Heart left ventricle (tissue), 16 donors: ENCODE measurements at regions of chr13 and their contacts with region 1.

Region 1: DNA sequence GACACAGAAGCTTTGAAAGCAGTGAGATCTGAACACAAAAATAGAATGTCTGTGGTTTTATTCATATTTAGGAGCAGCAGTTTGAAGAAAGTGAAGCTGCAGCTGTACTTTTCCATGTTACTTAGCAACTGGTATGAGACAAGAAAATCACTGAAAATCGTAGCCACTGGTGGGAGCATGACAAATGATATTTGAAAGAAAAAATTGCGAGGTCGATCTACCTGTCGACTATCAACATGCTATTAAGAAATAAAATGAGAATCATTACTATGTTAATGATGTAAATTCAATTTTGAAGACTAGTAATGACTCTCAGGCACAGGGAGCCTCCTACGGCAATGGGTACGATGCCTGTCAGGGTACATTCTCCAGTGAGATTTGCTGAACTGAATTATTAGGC is 436.4 kb downstream of the SLITRK5 start:
- DNase-seq: no peak
- ATAC-seq: no peak
- H3K4me3 ChIP-seq: no peak overlapping the region
- H3K27ac ChIP-seq: no peak overlapping the region
- H3K4me1 ChIP-seq: no peaks in the 10 kb centered on the region
- H3K27me3 ChIP-seq: no peaks in the 10 kb centered on the region
- CTCF ChIP-seq: no peak
- POLR2A ChIP-seq: no peak

Region 2: DNA sequence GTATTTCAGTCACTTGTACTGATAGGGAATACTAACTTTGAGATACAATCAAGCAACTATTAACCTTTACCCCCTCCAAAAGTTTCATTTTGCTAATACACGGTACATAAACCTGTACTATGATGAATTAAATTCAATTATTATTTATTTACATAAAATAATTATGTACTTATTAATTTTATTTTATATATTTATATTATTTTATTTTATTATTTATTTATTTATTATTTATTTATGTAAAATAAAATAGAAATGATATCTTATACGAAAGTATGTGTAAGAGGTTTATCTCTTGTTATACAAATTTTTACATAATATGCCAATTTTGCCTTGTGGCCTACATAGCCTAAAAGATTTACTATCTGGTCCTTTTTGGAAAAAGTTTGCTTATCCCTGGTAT is 127.9 kb after region 1 on chr13:
- intact Hi-C with region 1: no loop called
- DNase-seq: no peak
- ATAC-seq: no peak
- H3K4me3 ChIP-seq: no peak overlapping the region
- H3K27ac ChIP-seq: no peak overlapping the region
- H3K4me1 ChIP-seq: no peaks in the 10 kb centered on the region
- H3K27me3 ChIP-seq: no peaks in the 10 kb centered on the region
- CTCF ChIP-seq: no peak
- POLR2A ChIP-seq: no peak

Region 3: GRCh38 chr13:88507909-88508308 is 400.3 kb after region 1 on chr13:
- intact Hi-C with region 1: loop called in 1 of 10 experiments (anchors 10 kb)
- DNase-seq: no peak
- ATAC-seq: no peak
- H3K4me3 ChIP-seq: no peak overlapping the region
- H3K27ac ChIP-seq: no peak overlapping the region
- H3K4me1 ChIP-seq: no peaks in the 10 kb centered on the region
- H3K27me3 ChIP-seq: no peaks in the 10 kb centered on the region
- CTCF ChIP-seq: no peak
- POLR2A ChIP-seq: no peak